Posterior cingulate gyrus (tissue), 11 donors: ENCODE measurements at regions of chr7 and their contacts with region 1.

Region 1: DNA sequence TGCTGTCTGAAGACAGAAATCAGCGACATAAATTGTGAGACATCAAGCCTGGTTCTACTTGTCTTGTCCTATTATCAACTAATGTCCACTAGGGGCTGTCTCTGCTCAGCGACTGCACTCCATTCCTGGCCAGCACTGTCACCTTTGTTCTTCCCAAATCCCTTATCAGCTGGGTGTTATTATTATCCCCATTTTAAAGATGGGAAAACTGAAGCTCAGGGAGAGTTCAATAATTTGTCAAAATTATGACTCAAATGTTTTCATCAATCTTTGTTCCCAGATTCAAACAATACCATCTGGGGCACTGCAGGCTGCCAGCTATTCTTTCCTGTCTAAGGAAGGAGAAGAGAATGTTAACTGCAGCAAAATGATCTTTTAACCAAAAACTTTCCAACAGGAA is 431.6 kb upstream of the NFE2L3 start:
- DNase-seq: no peak

Region 2: DNA sequence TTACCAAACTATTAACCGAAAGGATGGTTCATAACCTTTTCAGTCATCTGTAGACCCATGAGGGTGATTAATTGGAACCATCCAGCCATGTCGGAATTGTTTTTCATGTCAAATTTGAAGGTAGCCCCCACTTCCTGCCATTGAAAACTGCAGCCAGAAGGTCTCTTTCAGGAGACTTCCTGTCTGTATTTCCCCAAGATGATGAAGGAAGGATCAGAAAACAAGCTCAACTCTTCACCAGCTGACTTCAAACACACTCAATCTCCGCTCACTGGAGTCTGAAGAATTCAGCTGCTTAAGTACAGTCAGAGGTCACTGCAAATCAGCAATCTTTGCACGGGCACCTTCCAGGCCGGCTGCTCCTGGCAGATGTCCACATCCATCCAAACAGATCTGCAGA is 200.4 kb before region 1 on chr7:
- intact Hi-C with region 1: no loop called
- DNase-seq: no peak

Region 3: DNA sequence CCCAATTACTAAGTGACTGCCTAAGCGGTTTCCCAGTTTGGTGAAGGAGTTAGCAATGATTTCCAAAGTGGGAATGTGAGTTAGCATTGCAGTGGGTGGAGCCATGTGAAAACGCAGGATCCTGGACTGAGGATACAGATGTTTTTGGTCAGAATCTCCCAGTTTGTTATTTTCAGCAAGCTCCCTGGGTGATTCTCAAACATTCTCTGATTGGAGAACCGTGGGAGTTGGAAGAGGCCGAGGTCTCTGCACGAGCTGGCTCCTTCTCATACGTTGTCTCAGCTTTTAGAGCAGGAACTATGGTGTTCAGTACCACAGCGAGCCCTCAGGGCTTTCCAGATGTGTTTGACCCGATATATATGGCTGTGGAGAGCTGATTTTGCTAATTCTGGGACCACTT is 95.6 kb before region 1 on chr7:
- intact Hi-C with region 1: no loop called
- DNase-seq: no peak

Region 4: GRCh38 chr7:25839084-25839769 is 118.8 kb after region 1 on chr7:
- intact Hi-C with region 1: loop called (anchors 10 kb)
- DNase-seq: no peak